Activated CD4-positive, alpha-beta memory T cell treated with anti-CD3 and anti-CD28 coated beads, Interleukin-2, amount 10 ng/mL, durations not matched to agents 7 days and 5 days (primary cell): ENCODE measurements at regions of chr10 and their contacts with region 1.

Region 1: GRCh38 chr10:14822879-14823755 is 14.7 kb downstream of the CDNF start:
- DNase-seq: peak; percentile 38
- H3K4me3 Mint-ChIP-seq: no peak overlapping the region
- H3K27ac Mint-ChIP-seq: no peak overlapping the region
- H3K4me1 Mint-ChIP-seq: peaks cover 9% of the 10 kb centered on the region
- H3K27me3 Mint-ChIP-seq: peaks cover 5% of the 10 kb centered on the region

Region 2: DNA sequence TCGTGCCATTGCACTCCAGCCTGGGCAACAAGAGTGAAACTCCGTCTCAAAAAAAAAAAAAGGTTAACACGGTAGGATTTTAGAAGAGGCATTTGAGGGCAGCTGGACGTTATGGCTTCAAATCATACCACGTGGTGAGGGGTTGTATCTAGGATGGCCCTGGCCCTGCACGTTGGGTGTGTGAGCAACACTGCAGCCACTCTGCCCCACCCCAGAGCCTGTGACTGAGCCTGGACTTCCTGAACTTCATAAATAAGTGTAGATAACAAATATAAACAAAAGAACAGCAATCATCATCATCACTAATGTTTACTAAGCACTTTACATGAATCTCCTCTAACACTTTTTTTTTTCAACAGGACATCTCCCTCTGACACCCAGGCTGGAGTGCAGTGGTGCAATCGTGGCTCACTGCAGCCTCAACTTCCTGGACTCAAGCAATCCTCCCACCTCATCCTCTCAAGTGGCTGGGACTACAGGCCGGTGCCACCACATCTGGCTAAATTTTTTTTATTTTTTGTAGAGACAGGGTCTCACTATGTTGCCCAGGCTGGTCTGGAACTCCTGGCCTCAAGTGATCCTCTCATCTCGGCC is 322.8 kb before region 1 on chr10:
- CTCF ChIA-PET with region 1: interaction called, 19 read pairs
- POLR2A ChIA-PET with region 1: interaction called, 3 read pairs
- DNase-seq: no peak
- H3K4me3 Mint-ChIP-seq: no peak overlapping the region
- H3K27ac Mint-ChIP-seq: no peak overlapping the region
- H3K4me1 Mint-ChIP-seq: peaks cover 14% of the 10 kb centered on the region
- H3K27me3 Mint-ChIP-seq: peaks cover 3% of the 10 kb centered on the region

Region 3: GRCh38 chr10:14536241-14537213 is 286.6 kb before region 1 on chr10:
- CTCF ChIA-PET with region 1: interaction called, 16 read pairs
- POLR2A ChIA-PET with region 1: interaction called, 5 read pairs
- DNase-seq: peak; percentile 47
- H3K4me3 Mint-ChIP-seq: no peak overlapping the region
- H3K27ac Mint-ChIP-seq: no peak overlapping the region
- H3K4me1 Mint-ChIP-seq: peaks cover 80% of the 10 kb centered on the region
- H3K27me3 Mint-ChIP-seq: no peaks in the 10 kb centered on the region

Region 4: DNA sequence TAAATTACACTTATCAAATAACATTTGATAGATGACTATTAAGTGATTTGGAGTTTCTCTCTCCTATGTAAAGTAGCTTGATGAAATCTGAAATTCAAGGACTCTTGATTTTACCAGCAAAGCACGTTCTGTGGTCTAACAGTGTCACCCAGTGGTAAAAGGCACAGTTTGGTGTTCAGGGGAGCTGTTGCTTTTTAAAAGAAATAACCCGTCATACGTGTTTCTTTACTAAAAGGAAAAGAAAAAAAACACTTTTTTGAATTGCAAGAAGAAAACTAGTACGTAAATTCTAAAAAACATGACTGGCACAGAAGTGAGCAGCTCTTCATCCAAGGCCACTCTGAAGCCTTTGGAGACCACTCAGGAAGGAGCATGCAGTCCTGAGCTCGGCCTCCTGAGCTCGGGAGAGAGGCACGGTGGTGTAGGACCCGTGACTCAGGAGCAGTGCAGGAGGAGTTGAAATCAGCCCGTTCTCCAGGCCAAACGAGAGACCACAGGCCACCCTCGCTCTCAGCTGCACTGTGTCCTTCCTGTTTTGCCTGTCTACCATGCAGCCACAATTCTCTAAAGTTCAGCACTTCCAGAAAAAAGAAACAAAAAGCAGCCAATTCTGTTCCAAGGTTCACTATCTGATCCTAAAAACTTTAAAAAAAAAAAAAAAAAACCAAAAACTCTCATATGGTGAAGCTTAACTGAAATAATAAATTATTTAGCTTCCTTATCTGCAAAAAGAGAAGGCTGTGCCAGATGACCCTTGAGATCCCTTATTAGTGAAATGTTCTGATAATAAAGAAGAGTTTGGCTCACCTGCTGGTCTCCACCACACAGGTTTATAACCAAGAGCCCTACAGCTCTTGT is 279.8 kb before region 1 on chr10:
- CTCF ChIA-PET with region 1: interaction called, 17 read pairs
- POLR2A ChIA-PET with region 1: no interaction called
- DNase-seq: no peak
- H3K4me3 Mint-ChIP-seq: peak overlapping the region; percentile 14
- H3K27ac Mint-ChIP-seq: peak overlapping the region; percentile 54
- H3K4me1 Mint-ChIP-seq: peaks cover 77% of the 10 kb centered on the region
- H3K27me3 Mint-ChIP-seq: no peaks in the 10 kb centered on the region